GM23248 (cell line): ENCODE measurements at regions of chr4 and their contacts with region 1.

Region 1: DNA sequence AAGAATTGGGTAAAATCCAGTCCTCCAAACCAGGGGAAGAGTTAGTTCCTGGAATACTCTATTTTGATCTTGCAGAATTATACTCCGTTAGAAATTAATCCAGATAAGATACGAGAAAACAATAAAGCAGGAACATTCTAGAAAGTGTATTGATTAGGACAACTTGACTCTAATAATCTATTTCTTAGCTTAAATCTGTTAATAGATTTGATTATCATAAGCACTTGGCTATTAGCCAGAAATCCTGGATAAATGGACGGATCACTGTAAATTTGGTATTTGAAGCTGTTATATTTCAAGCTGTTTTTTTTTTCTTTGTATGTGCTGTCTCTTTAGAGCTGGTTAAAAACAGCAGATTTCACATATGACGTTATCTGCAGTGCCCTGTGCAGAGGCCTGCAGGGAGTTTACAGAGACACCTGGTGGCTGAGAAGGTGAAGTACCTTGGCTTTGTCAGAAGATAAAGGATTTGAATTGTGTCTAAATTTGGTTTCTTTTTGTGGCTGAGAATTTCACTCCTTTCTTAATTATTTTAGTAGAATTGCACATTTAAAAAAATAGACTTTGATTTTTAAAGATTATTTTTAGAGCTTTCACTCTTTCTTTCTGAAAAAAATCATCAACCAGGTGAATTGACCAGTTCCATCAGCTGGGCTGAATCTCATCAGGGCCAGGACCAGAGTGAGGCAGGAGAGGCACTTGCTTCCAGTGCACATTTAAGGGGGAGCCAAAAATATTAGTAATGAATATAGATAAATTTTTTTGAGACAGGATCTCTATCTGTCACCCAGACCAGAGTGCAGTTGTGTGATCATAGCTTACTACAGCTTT is 9.7 kb upstream of the CHRNA9 start:
- DNase-seq: peak; percentile 86
- H3K4me3 ChIP-seq: no peak overlapping the region
- H3K27ac ChIP-seq: no peak overlapping the region
- H3K4me1 ChIP-seq: no peaks in the 10 kb centered on the region
- H3K27me3 ChIP-seq: no peaks in the 10 kb centered on the region

Region 2: DNA sequence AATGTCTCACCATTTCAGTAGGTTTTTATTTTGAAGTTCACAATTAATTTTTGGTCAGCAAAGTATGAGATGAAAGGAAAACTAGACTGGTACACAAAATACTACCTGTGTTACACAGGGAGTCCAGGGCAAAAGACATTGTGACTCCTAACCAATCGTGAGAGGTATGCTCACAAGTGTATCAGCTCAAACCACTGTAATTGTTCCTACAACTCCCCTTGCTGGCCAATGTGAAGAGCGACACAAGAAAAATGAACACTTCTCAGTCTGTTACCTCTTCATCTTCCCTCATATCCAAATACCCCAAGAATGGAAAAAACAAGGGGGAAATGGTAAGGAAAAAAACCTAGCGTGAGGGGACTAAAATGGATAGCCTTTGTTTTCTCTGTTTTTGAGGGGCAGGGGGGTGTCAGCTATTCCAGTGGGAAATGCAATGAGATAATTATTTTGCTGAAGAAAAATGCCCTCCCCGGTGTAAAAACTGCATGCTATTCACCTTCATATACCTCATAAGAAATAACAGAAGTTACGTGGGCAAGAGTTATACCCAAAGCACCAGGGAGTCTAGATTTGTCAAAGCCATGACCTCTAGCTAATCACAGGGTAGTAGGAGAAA is 393.7 kb after region 1 on chr4:
- in situ Hi-C with region 1: loop called (anchors 10 kb)
- DNase-seq: peak; percentile 63
- H3K4me3 ChIP-seq: no peak overlapping the region
- H3K27ac ChIP-seq: no peak overlapping the region
- H3K4me1 ChIP-seq: no peaks in the 10 kb centered on the region
- H3K27me3 ChIP-seq: no peaks in the 10 kb centered on the region; the same call in 1 of the 2 replicates